Aorta (tissue), 5 donors: ENCODE measurements at regions of chr2 and their contacts with region 1.

Region 1: DNA sequence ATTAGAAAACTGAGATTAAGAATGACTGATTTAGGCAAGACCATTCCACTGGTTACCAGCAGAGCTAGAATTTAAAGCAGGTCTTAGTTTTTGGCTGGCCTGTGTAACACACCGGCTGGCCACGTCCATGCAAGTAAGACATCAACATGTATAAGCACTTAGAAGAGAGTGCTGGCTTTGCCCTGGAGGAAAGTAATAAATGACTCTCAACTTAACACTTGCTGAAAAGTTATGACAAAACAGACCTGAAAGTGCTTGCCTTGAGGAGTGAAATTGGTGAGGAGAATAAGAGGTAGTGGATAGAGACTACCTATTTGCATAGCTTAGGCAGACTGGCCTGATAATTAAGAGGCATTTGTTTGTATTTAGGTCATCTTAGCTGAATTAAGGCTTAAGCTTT is 165.7 kb upstream of the KCNJ3 start:
- DNase-seq: no peak
- ATAC-seq: no peak
- H3K4me3 ChIP-seq: no peak overlapping the region
- H3K27ac ChIP-seq: no peak overlapping the region
- H3K4me1 ChIP-seq: peaks cover 0 to 3% of the 10 kb centered on the region in 2 donors
- H3K27me3 ChIP-seq: no peaks in the 10 kb centered on the region

Region 2: DNA sequence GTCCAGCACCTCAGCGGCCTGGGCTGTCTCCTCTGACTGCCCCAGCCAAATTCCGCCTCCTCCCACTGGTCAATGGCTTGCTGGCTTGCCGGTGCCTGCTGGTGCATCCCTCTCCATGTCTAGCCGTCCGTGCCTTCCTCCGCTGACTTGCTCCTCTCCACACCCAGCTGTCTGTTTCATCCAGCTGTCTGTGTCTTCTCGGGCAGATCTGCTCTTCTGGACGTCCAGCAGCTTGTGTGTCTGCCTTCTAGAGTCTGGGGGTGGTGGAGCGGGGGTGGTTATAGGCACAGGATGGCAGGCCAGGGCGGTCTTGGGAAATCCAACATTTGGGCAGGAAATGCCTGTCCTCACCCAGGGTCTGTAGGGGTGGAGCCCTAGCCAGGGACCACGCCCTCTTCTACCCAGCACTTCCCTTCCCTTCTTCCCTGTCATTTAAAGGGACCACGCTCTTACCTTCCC is 291.8 kb before region 1 on chr2:
- intact Hi-C with region 1: no loop called
- DNase-seq: no peak
- ATAC-seq: no peak
- H3K4me3 ChIP-seq: no peak overlapping the region
- H3K27ac ChIP-seq: no peak overlapping the region
- H3K4me1 ChIP-seq: no peaks in the 10 kb centered on the region
- H3K27me3 ChIP-seq: no peaks in the 10 kb centered on the region

Region 3: DNA sequence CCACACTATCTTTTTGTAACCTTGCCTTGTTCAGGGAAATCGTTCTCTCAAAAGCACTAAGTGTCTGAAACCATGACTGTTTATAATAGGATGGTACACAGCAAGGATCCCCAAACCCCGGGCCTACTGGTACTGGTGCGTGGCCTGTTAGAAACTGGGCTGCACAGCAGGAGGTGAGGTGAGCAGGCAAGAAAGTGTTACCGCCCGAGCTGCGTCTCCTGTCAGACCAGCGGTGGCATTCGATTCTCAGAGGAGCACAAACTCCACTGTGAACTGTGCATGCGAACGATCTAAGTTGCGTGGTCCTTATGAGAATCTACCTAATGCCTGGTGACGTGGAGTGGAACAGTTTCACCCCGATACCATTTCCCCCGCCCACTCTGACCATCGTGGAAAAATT is 83.9 kb after region 1 on chr2:
- intact Hi-C with region 1: loop called in 1 of 2 experiments (anchors 5 kb)
- DNase-seq: no peak
- ATAC-seq: no peak
- H3K4me3 ChIP-seq: no peak overlapping the region
- H3K27ac ChIP-seq: no peak overlapping the region
- H3K4me1 ChIP-seq: no peaks in the 10 kb centered on the region
- H3K27me3 ChIP-seq: no peaks in the 10 kb centered on the region

Region 4: GRCh38 chr2:154697418-154698252 is 164.9 kb after region 1 on chr2:
- intact Hi-C with region 1: loop called in 1 of 2 experiments (anchors 5 kb)
- DNase-seq: peak; percentile 60 to 84
- ATAC-seq: peak; percentile 76
- H3K4me3 ChIP-seq: peak overlapping the region; percentile 50 to 72
- H3K27ac ChIP-seq: peak overlapping the region in 1 of 2 donors; percentile 18
- H3K4me1 ChIP-seq: no peaks in the 10 kb centered on the region
- H3K27me3 ChIP-seq: no peaks in the 10 kb centered on the region